AG04449 (cell line): ENCODE measurements at regions of chr19 and their contacts with region 1.

Region 1: DNA sequence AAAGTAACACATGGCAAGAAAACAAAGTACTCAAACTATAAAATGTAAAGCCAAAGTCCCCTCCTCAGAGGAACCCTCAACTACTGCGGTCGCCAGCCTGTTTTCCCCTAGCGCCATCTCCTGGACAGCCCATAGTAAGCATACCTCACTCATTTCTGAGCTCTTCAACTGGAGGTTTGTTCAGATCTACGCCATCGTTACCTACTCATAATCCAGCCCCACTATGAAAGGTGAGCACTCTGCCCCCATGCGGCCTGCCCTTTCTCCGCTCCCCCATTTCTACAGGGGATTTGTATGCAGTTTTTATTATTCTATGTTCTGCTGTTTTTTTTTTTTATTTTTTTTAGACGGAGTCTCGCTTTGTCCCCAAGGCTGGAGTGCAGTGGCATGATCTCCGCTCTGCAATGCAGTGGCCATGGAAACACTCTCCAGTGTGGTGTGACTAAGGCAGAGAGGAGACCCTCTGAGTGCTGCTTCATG is 26.2 kb downstream of the OPA3 start:
- DNase-seq: no peak
- H3K4me3 ChIP-seq: no peak overlapping the region
- CTCF ChIP-seq: peak; percentile 70

Region 2: GRCh38 chr19:45423589-45424190 is 134.7 kb before region 1 on chr19 and contains the start of gene ERCC1:
- CTCF ChIA-PET with region 1: no interaction called
- POLR2A ChIA-PET with region 1: no interaction called
- DNase-seq: no peak
- H3K4me3 ChIP-seq: peak within 1 kb of the TSS; percentile 82
- CTCF ChIP-seq: no peak

Region 3: DNA sequence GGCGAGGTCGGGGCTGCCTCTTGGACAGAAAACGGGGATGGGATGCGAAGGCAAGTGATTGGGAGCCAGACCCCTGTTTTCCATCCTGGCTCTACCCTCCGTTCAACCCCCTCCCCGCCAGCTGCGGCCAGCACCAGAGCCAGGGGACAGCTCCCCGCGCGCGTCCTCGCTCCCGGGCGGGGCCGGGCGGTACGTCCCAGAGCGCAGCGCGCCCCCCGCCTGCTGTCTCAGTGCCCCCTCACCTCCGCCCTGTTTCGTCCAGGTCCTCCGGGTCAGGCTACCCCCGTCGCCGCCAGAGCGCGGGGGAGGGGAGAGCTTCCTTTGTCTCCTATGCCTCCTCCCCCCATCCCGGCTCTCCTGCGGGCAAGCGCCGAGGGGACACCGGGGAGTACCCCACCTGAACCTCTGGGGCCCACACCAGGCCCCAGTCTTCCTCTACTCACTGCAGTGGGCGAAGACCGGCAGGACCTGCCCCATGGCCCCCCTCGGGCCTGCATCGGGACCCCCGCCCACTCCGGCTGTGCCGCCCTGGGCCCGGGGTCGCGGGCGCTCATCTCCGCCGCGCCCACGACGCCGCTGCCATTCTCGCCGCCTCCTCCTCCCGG is 62.0 kb before region 1 on chr19:
- CTCF ChIA-PET with region 1: interaction called, 29 read pairs
- POLR2A ChIA-PET with region 1: no interaction called
- DNase-seq: no peak
- H3K4me3 ChIP-seq: peak overlapping the region; percentile 69
- CTCF ChIP-seq: no peak

Region 4: DNA sequence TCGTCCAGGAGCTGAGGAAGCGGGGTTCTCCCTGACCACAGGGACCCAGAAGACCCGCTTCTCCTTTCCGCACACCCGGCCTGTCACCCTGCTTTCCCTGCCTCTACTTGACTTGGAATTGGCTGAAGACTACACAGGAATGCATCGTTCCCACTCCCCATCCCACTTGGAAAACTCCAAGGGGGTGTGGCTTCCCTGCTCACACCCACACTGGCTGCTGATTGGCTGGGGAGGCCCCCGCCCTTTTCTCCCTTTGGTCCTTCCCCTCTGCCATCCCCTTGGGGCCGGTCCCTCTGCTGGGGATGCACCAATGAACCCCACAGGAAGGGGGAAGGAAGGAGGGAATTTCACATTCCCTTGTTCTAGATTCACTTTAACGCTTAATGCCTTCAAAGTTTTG is 32.3 kb before region 1 on chr19:
- CTCF ChIA-PET with region 1: interaction called, 13 read pairs
- POLR2A ChIA-PET with region 1: no interaction called
- DNase-seq: no peak
- H3K4me3 ChIP-seq: no peak overlapping the region
- CTCF ChIP-seq: no peak

Region 5: GRCh38 chr19:45547976-45548609 is 10.3 kb before region 1 on chr19:
- CTCF ChIA-PET with region 1: interaction called, 41 read pairs
- POLR2A ChIA-PET with region 1: no interaction called
- DNase-seq: no peak
- H3K4me3 ChIP-seq: no peak overlapping the region
- CTCF ChIP-seq: no peak

Region 6: DNA sequence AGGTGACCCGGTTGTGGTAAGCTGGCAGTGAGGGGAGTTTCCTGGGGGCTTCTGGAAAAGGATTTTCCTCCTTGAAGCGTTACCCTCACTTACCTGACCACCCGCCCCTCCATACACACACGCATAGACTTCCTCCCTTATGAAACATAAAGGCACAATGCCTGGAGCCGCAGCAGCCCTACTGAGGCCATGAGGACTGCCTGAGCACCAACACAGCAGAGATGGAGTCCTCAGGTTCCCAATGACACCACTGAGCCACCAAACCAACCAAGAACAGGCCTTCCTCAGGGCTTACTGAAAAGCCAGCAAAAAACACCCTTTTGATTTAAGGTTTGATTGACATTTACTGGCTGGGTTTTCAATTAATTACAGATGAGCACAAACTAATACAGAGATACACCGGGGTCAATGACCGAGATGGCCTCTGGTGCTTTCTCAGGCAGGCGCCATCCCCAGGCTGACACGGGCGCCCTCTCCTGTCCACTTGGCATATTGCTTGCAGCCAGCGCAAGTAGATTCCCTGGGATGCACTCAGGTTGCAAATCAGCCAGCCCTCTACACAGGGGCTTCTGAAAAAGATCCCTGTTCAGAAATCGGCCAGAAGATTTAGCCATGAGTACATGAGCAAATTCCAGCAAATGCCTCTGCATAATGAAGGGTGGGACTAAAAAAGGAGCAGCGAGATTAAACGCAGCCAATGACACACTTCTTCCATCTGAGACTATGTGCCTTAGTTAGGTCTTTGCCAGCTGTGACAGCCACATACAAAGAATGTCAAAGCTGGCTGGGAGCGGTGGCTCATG is 11.4 kb after region 1 on chr19:
- CTCF ChIA-PET with region 1: interaction called, 34 read pairs
- POLR2A ChIA-PET with region 1: no interaction called
- DNase-seq: no peak
- H3K4me3 ChIP-seq: no peak overlapping the region
- CTCF ChIP-seq: peak; percentile 88